Activated CD4-positive, alpha-beta memory T cell treated with anti-CD3 and anti-CD28 coated beads for 36 hours (primary cell): ENCODE measurements at regions of chr5 and their contacts with region 1.

Region 1: DNA sequence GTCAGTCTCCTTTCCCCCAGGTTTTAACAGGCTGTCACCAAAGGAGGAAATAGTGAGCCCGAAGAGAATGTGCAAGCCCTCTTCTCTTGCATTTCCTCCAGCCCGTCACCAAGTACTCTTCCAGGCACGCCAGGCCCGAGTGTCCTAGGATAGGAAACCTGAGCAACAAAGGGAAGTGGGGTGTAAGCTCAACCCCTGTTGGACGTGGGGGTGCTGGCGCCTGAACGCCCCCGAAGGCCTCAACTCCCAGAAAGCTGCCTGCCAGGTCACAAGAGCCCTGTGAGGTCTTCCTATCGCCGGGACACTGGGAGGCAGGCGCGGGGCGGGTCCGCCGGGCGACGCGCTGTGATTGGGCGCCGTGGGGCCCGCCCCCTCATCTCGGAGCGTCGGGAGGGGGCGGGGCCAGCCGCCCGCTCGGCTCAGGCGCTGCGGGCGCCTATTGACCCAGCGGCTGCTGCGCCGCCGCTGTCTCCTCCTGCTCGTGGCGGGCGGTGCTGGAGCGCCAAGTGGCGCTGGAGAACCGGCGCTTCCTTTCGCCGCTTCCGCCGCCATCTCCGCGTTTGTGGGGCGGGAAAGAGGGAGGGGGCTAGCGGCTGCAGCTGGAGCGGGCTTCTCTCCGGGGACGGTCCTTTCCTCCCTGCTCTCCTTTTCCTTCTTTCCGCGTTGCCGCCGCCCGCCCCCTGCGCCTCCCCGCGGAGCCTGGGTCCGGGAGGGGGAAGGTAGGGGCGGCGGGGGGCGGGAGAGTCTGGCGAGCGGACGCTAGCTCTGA is 572 bp upstream of the MAN2A1 start:
- DNase-seq: peak; percentile 85
- H3K4me3 Mint-ChIP-seq: peak overlapping the region; percentile 87
- H3K27ac Mint-ChIP-seq: peak overlapping the region; percentile 89
- H3K4me1 Mint-ChIP-seq: peaks cover 40% of the 10 kb centered on the region
- H3K27me3 Mint-ChIP-seq: no peaks in the 10 kb centered on the region

Region 2: DNA sequence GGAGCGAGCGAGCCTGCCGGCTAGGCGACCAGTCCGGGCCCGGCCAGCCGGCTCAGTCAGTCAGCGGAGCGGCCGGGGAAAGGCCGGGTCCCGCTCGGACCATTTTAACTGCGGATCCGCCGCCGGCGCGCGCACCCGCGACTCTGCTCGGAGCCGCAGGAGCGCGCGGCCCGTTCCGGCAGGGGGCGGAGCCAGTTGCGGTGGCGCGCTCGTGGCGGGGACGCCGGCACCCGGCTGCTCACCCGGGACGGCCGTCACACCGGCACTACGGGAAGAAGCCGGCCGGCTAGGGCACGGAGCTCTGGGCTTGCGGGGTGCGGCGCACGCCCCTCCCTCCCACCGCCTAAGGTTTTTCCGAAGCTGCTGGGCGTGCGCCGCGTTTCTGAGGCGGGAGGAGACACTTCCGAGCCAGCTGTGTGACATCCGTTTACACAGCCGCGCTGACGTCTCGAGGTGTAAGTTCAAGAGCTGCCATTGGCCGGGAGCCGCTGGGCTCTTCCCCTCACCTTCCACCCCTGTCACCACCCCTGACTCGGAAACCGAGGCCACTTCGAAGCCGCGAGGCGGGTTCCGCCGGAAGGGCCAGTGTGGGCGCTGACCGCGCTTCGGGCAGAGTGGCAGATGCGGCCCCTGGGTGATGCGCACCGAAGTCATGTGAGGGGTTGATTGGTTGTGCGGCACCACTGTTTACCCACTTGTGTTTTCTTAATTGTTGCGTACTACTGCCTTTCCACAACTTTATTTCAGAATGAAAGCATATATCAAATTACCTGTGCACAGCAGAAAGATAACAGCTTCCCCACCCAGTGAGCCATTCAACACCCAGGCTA is 1307.0 kb before region 1 on chr5 and contains the start of gene FBXL17:
- CTCF ChIA-PET with region 1: no interaction called
- POLR2A ChIA-PET with region 1: no interaction called
- intact Hi-C with region 1: loop called (anchors 1 kb)
- DNase-seq: peak; percentile 96
- H3K4me3 Mint-ChIP-seq: peak within 1 kb of the TSS; percentile 79
- H3K27ac Mint-ChIP-seq: peak within 1 kb of the TSS; percentile 92
- H3K4me1 Mint-ChIP-seq: peaks cover 34% of the 10 kb centered on the region
- H3K27me3 Mint-ChIP-seq: peaks cover 1% of the 10 kb centered on the region
- total RNA-seq, gene FBXL17: 5.5 to 6.7 TPM

Region 3: DNA sequence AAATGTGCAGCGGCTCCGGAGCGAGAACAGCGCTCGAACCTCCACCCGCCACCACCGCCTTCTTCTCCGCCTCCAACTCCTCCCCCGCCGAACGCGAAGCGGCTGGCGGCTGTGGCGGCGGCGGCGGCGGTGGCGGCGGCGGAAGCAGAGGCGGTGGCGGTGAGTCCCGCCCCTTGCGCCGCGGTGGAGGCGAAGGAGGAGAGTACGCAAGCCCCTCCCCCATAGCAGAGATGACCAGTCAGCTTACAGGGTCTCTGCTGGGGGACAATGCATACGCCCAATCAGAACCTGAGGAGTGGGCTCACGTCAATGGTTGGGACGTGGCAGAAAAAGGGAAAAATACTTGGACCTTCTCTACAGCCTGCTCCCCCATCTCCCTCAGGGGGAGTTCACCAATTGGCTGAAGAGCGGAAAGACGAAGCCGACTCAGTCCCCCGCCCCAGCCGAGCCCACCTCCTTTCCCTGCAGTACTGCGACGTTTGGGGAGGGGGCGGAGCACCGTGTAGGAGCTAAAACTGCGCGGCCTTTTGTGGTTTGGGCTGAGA is 279.2 kb before region 1 on chr5 and contains the start of gene PJA2:
- CTCF ChIA-PET with region 1: interaction called, 4 read pairs
- POLR2A ChIA-PET with region 1: interaction called, 4 read pairs
- intact Hi-C with region 1: loop called (anchors 1 kb)
- DNase-seq: peak; percentile 98
- H3K4me3 Mint-ChIP-seq: peak within 1 kb of the TSS; percentile 89
- H3K27ac Mint-ChIP-seq: peak within 1 kb of the TSS; percentile 97
- H3K4me1 Mint-ChIP-seq: peaks cover 37% of the 10 kb centered on the region
- H3K27me3 Mint-ChIP-seq: no peaks in the 10 kb centered on the region
- total RNA-seq, gene PJA2: 57.3 to 58.5 TPM

Region 4: GRCh38 chr5:109921735-109922380 is 232.7 kb after region 1 on chr5:
- CTCF ChIA-PET with region 1: no interaction called
- POLR2A ChIA-PET with region 1: no interaction called
- intact Hi-C with region 1: loop called (anchors 2 kb)
- DNase-seq: peak; percentile 63
- H3K4me3 Mint-ChIP-seq: peak overlapping the region; percentile 37
- H3K27ac Mint-ChIP-seq: peak overlapping the region; percentile 86
- H3K4me1 Mint-ChIP-seq: peaks cover 32% of the 10 kb centered on the region
- H3K27me3 Mint-ChIP-seq: no peaks in the 10 kb centered on the region

Region 5: DNA sequence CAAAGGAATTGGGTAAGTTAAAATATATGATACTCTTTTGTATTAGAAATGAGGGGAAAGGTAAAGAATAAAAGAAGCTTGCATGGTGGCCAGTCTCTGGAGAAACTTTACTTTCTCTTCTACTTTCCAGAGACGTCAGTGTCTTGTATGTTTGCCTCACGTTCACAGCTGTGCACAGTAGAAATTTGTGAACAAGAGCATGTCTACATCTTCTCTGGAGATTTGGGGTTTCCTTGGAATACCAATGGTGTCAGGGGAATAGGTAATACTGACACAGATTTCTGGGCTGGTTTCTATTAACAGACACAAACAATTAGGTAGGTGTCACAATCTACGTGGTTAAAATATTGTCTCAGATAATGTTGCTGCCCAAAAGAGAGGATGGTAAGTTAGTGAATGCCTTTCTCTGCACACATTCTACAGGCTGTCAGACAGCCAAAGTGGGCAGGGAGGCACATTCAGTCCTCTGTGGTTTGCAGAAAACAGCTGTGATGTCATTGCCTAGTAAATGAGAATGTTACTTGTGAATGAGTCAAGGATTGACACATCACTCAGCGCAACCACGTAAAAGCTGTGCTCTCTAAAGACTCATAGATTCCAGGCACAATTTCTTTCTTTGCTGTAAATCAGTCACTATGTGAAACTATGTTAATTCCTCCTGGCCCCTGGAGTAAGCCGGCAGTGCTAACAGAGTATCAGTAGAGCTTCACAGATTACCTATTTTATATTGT is 397.7 kb after region 1 on chr5:
- CTCF ChIA-PET with region 1: interaction called, 5 read pairs
- POLR2A ChIA-PET with region 1: no interaction called
- intact Hi-C with region 1: loop called (anchors 1 kb)
- DNase-seq: peak; percentile 75
- H3K4me3 Mint-ChIP-seq: peak overlapping the region; percentile 23
- H3K27ac Mint-ChIP-seq: peak overlapping the region; percentile 83
- H3K4me1 Mint-ChIP-seq: peaks cover 31% of the 10 kb centered on the region
- H3K27me3 Mint-ChIP-seq: no peaks in the 10 kb centered on the region

Region 6: DNA sequence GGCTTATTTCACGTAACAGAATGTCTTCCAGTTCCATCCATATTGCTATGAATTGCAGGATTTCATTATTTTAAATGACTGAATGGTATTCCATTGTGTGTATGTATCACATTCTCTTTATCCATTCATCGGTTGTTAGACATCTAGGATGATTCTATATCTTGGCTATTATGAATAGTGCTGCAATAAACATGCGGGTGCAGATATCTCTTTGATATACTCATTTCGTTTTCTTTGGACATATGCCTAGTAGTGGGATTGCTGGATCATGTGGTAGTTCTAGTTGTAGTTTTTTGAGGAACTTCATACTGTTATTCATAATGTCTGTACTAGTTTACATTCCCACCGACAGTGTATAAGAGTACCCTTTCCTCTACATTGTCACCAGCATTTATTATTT is 461.0 kb after region 1 on chr5:
- CTCF ChIA-PET with region 1: no interaction called
- POLR2A ChIA-PET with region 1: no interaction called
- intact Hi-C with region 1: no loop called
- DNase-seq: no peak
- H3K4me3 Mint-ChIP-seq: no peak overlapping the region
- H3K27ac Mint-ChIP-seq: no peak overlapping the region
- H3K4me1 Mint-ChIP-seq: no peaks in the 10 kb centered on the region
- H3K27me3 Mint-ChIP-seq: no peaks in the 10 kb centered on the region

Region 7: DNA sequence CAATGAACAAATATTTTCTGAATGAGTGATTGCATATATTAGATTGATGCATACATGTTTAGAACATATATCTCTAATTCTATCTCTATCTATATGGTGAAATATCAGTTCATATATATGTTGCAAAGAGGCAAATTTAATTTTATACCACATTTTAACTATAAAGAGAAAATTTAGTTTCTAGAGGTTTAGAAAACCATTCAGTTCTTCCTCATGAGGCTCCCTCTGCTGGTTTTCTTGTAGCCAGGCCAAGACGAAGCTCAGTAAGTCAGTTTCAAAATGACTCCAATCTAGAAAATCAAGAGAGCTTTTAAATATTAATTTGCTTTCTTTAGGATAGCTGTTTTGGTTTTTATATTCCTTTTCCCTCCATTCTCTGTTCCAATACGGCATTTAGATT is 725.2 kb after region 1 on chr5:
- CTCF ChIA-PET with region 1: no interaction called
- POLR2A ChIA-PET with region 1: no interaction called
- intact Hi-C with region 1: loop called (anchors 5 kb)
- DNase-seq: no peak
- H3K4me3 Mint-ChIP-seq: no peak overlapping the region
- H3K27ac Mint-ChIP-seq: no peak overlapping the region
- H3K4me1 Mint-ChIP-seq: no peaks in the 10 kb centered on the region
- H3K27me3 Mint-ChIP-seq: no peaks in the 10 kb centered on the region

Region 8: GRCh38 chr5:110751902-110752762 is 1063.0 kb after region 1 on chr5:
- CTCF ChIA-PET with region 1: interaction called, 4 read pairs
- POLR2A ChIA-PET with region 1: no interaction called
- intact Hi-C with region 1: loop called (anchors 5 kb)
- DNase-seq: peak; percentile 50
- H3K4me3 Mint-ChIP-seq: peak overlapping the region; percentile 62
- H3K27ac Mint-ChIP-seq: peak overlapping the region; percentile 88
- H3K4me1 Mint-ChIP-seq: peaks cover 46% of the 10 kb centered on the region
- H3K27me3 Mint-ChIP-seq: no peaks in the 10 kb centered on the region